Lower lobe of right lung (tissue), 2 donors: ENCODE measurements at regions of chr12 and their contacts with region 1.

Region 1: DNA sequence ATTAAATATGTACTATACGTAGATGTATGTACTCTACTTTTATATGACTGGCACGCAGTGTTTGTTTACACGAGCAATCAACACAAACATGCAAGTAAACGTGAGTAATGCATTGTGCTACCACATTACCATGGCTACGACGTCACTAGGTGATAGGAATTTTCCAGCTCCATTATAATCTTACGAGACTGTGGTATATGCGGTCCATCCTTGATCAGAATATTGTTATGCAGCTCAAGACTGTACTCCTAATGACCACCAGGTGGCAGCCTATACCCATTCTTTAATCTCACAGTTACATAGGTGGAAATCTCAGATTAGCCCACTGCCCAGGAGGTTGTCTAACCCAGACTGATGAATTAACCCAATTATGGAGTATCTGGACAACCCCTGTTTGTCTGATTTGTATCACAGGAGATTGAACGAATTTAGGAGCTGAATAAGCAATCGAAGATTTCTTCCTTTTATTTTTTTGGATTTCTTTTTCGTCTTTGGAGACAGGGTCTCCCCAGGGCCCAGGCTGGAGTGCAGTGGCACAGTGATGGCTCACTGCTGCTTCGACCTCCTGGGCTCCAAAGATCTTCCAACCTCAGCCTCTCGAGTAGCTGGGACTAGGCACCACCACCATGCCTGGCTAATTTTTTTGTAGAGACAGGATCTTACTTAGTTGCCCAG is 8.7 kb upstream of the TESPA1 start:
- DNase-seq: no peak
- ATAC-seq: peak; percentile 81 to 85
- H3K4me3 ChIP-seq: no peak overlapping the region
- H3K27ac ChIP-seq: no peak overlapping the region
- H3K4me1 ChIP-seq: no peaks in the 10 kb centered on the region
- H3K27me3 ChIP-seq: peaks cover 6% of the 10 kb centered on the region
- CTCF ChIP-seq: peak; percentile 89

Region 2: GRCh38 chr12:55073043-55074022 is 80.0 kb after region 1 on chr12:
- intact Hi-C with region 1: loop called (anchors 5 kb)
- DNase-seq: peak; percentile 69
- ATAC-seq: peak; percentile 81 to 84
- H3K4me3 ChIP-seq: no peak overlapping the region
- H3K27ac ChIP-seq: no peak overlapping the region
- H3K4me1 ChIP-seq: no peaks in the 10 kb centered on the region
- H3K27me3 ChIP-seq: peaks cover 7% of the 10 kb centered on the region
- CTCF ChIP-seq: peak; percentile 87